ENCODE measurements at regions of chr17 and their contacts with region 1.

Region 1: GRCh38 chr17:8162233-8162996 is at the start of gene VAMP2:
- DNase-seq: peak; percentile 90
- ATAC-seq: peak; percentile 61
- H3K4me3 Mint-ChIP-seq: peak within 1 kb of the TSS; percentile 85
- H3K27ac Mint-ChIP-seq: peak within 1 kb of the TSS; percentile 99
- H3K4me1 Mint-ChIP-seq: peaks cover 57% of the 10 kb centered on the region
- H3K27me3 Mint-ChIP-seq: no peaks in the 10 kb centered on the region
- total RNA-seq, gene VAMP2: 47.6 to 68.9 TPM

Region 2: DNA sequence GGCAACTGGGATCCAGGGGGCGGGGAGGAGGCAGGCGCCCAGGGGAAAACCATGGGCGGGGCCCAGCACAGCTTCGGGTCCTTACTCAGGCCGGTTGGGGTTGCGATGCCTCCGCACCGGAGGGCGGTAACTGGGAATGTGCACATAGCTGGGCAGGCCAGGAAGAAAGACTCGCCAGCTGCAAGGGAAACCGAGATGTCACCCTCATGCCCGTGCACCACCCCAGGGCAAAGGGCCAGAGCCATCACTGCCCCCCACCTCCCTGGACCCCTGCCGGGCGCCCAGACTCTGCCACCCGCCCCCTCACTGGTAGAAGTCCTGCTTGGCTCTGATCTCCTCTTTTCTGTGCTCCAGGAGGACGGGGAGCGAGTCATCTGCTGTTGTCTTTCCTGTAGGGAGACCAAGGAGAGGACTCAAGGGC is 81.6 kb before region 1 on chr17:
- CTCF ChIA-PET with region 1: no interaction called
- DNase-seq: no peak
- ATAC-seq: no peak
- H3K4me3 Mint-ChIP-seq: no peak overlapping the region
- H3K27ac Mint-ChIP-seq: no peak overlapping the region
- H3K4me1 Mint-ChIP-seq: peaks cover 12% of the 10 kb centered on the region
- H3K27me3 Mint-ChIP-seq: peaks cover 11% of the 10 kb centered on the region

Region 3: DNA sequence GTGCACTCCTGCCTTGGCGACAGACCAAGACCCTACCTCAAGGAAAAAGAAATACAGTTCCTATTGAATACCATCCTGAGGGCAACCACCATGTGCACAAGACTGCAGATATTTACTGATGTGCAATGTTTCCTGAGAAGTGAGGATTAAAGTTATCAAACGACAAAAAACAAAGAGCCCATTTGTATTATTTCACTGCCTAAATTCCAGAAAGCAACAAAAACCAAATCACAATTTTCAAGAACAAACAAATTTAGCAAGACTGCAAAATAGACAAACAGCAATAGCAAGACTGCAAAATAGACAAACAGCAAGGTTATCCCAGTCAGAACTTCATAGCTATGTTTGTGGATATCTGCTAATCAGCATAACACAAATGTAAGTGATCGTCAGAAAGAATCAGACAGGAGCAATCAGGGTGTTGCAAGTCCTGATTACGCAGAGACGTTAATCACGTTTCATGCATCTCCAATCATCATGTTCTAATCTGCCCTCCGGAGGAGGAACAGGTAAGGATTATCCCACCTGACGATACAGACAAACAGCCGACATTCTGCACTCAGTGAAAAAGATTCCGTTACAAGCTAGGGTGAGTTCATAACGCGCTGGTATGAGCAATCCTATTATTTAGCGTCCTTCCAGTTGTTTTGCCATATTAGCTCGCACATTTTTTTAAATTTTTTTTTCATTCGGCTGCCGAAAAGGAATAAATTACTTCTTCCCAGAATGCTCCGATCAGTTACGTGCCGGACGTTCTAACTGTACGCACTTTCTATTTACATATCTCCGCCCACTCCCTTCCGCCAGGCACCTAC is 10.8 kb after region 1 on chr17:
- CTCF ChIA-PET with region 1: interaction called, 17 read pairs
- DNase-seq: peak; percentile 91
- ATAC-seq: peak; percentile 75
- H3K4me3 Mint-ChIP-seq: peak overlapping the region; percentile 77
- H3K27ac Mint-ChIP-seq: peak overlapping the region; percentile 99
- H3K4me1 Mint-ChIP-seq: peaks cover 41% of the 10 kb centered on the region
- H3K27me3 Mint-ChIP-seq: no peaks in the 10 kb centered on the region

Measured in activated CD8-positive, alpha-beta memory T cell treated with anti-CD3 and anti-CD28 coated beads, Interleukin-2, amount 10 ng/mL, durations not matched to agents 7 days and 5 days (primary cell).